GM12878 (cell line): ENCODE measurements at regions of chr17 and their contacts with region 1.

Region 1: GRCh38 chr17:45135192-45135977 is at the start of gene ACBD4:
- DNase-seq: peak; percentile 97
- ATAC-seq: peak; percentile 90
- H3K4me3 ChIP-seq: peak within 1 kb of the TSS; percentile 84
- H3K27ac ChIP-seq: peak within 1 kb of the TSS; percentile 28
- H3K4me1 ChIP-seq: peaks cover 8% of the 10 kb centered on the region
- H3K27me3 ChIP-seq: no peaks in the 10 kb centered on the region
- CTCF ChIP-seq: peak; percentile 100
- EP300 ChIP-seq: no peak
- POLR2A ChIP-seq: peak; percentile 73
- RAD21 ChIP-seq: peak; percentile 94
- polyA plus RNA-seq, gene ACBD4: 0.20 to 0.27 TPM

Region 2: DNA sequence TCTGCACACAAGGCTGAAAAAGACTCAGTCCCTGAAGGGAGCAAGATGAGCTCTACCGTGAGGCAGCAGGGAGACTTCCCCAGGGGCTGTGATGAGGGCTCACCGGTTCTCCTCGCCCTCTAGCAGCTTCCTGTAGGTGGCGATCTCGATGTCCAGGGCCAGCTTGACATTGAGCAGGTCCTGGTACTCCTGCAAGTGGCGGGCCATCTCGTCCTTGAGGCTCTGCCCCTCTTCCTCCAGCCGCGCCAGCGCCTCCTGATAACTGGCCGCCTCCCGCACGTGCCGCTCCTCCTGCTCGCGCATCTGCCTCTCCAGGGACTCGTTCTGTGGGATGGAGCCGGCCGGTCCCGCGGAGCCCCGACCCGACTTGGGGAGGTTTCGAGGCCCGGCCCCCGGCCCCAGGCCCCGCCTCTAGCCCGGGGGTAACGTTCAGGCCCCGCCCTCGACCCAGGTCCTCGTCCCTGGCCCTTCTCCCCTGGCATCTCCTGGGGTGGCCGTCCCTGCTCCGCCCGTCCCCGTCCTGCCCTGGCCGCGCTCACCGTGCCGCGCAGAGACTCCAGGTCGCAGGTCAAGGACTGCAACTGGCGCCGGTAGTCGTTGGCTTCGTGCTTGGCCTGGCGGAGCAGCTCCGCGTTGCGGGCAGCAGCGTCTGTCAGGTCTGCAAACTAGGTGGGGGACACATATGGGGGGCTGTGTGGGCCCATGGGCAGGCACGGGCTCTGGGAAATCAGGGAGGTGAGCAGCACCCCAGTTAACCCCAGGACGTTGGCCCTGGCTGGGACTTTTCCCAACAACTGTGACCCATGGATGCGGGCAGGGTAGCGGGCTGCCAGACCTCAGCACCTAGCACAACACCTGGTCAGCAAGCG is 224.0 kb before region 1 on chr17:
- CTCF ChIA-PET with region 1: interaction called, 11 read pairs
- POLR2A ChIA-PET with region 1: no interaction called
- RAD21 ChIA-PET with region 1: no interaction called
- SMC1A ChIA-PET with region 1: no interaction called
- in situ Hi-C with region 1: no loop called
- intact Hi-C with region 1: no loop called
- DNase-seq: no peak
- ATAC-seq: peak; percentile 91
- H3K4me3 ChIP-seq: no peak overlapping the region
- H3K27ac ChIP-seq: no peak overlapping the region
- H3K4me1 ChIP-seq: peaks cover 9% of the 10 kb centered on the region
- H3K27me3 ChIP-seq: no peaks in the 10 kb centered on the region; a peak in 3 of 4 replicates
- CTCF ChIP-seq: peak; percentile 44 to 49 (median 44); a peak in 5 of 6 replicates
- EP300 ChIP-seq: no peak
- POLR2A ChIP-seq: no peak
- RAD21 ChIP-seq: peak; percentile 13; the same call in 1 of the 2 replicates

Region 3: GRCh38 chr17:45038728-45039634 is 96.4 kb before region 1 on chr17:
- CTCF ChIA-PET with region 1: interaction called, 13 read pairs
- POLR2A ChIA-PET with region 1: no interaction called
- RAD21 ChIA-PET with region 1: no interaction called
- SMC1A ChIA-PET with region 1: interaction called, 3 read pairs
- in situ Hi-C with region 1: no loop called
- intact Hi-C with region 1: no loop called
- DNase-seq: no peak
- ATAC-seq: no peak
- H3K4me3 ChIP-seq: no peak overlapping the region
- H3K27ac ChIP-seq: peak overlapping the region; percentile 69
- H3K4me1 ChIP-seq: peaks cover 6% of the 10 kb centered on the region
- H3K27me3 ChIP-seq: no peaks in the 10 kb centered on the region
- CTCF ChIP-seq: no peak
- EP300 ChIP-seq: no peak
- POLR2A ChIP-seq: no peak
- RAD21 ChIP-seq: no peak

Region 4: DNA sequence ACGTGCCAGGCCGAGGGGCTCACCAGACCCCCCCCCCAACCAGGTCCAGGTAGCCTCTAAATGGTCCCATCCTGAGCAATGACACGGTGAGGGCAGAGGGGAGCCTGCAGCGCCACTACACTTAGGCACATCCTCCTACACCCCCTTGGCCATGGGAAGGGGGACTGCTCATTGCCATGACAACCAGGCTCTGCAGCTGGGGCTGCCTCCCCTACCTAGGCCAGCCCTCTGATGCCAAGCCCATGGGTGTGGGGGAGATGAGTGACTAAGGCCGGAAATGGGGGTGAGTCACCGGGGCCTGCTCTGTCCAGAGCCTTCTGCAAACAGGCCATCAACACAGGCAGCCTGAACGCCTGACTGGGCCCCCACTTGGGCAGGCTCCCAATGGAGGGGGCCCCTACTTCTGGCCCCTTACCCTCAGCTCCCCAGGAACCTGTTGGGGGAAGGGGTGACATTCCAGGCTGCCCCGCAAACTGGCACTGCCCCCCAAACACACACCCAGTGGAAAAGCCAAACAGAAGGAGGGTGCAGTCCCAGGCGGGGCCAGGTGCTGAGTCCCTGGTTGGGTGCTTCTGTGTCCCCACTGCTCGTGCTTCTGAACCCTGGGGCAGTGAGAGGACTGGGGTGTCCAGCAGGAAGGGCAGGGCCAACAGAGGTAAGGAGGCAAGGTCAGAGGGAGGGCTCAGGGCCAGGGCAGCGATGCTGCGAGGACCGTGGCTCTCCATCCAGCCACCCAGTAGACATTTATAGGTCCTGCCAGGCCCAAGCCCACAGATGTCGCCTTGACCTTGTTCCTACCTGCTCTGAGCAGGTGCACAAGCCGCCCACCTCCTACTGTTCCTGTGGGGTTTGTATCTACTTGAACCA is 11.2 kb before region 1 on chr17:
- CTCF ChIA-PET with region 1: interaction called, 11 read pairs
- POLR2A ChIA-PET with region 1: interaction called, 3 read pairs
- RAD21 ChIA-PET with region 1: interaction called, 4 read pairs
- SMC1A ChIA-PET with region 1: no interaction called
- in situ Hi-C with region 1: no loop called
- intact Hi-C with region 1: no loop called
- DNase-seq: no peak
- ATAC-seq: peak; percentile 92
- H3K4me3 ChIP-seq: no peak overlapping the region
- H3K27ac ChIP-seq: no peak overlapping the region
- H3K4me1 ChIP-seq: no peaks in the 10 kb centered on the region
- H3K27me3 ChIP-seq: no peaks in the 10 kb centered on the region
- CTCF ChIP-seq: no peak
- EP300 ChIP-seq: no peak
- POLR2A ChIP-seq: no peak
- RAD21 ChIP-seq: no peak

Region 5: GRCh38 chr17:45161019-45161825 is 25.8 kb after region 1 on chr17:
- CTCF ChIA-PET with region 1: interaction called, 58 read pairs
- POLR2A ChIA-PET with region 1: interaction called, 3 read pairs
- RAD21 ChIA-PET with region 1: interaction called, 40 read pairs
- SMC1A ChIA-PET with region 1: interaction called, 12 read pairs
- in situ Hi-C with region 1: no loop called
- intact Hi-C with region 1: no loop called
- DNase-seq: peak; percentile 100
- ATAC-seq: peak; percentile 96
- H3K4me3 ChIP-seq: peak overlapping the region; percentile 86
- H3K27ac ChIP-seq: peak overlapping the region; percentile 98
- H3K4me1 ChIP-seq: peaks cover 8% of the 10 kb centered on the region
- H3K27me3 ChIP-seq: no peaks in the 10 kb centered on the region
- CTCF ChIP-seq: no peak
- EP300 ChIP-seq: peak in 1 of 2 experiments; percentile 69; a peak in 2 of 4 replicates
- POLR2A ChIP-seq: peak; percentile 95
- RAD21 ChIP-seq: no peak

Region 6: GRCh38 chr17:45197555-45198334 is 62.4 kb after region 1 on chr17:
- CTCF ChIA-PET with region 1: interaction called, 291 read pairs
- POLR2A ChIA-PET with region 1: interaction called, 11 read pairs
- RAD21 ChIA-PET with region 1: interaction called, 108 read pairs
- SMC1A ChIA-PET with region 1: interaction called, 72 read pairs
- in situ Hi-C with region 1: loop called (anchors 5 kb)
- intact Hi-C with region 1: loop called (anchors 1 kb)
- DNase-seq: peak; percentile 54
- ATAC-seq: peak; percentile 100
- H3K4me3 ChIP-seq: no peak overlapping the region
- H3K27ac ChIP-seq: no peak overlapping the region
- H3K4me1 ChIP-seq: peaks cover 8% of the 10 kb centered on the region
- H3K27me3 ChIP-seq: no peaks in the 10 kb centered on the region
- CTCF ChIP-seq: peak; percentile 99 to 100 (median 99)
- EP300 ChIP-seq: no peak
- POLR2A ChIP-seq: no peak
- RAD21 ChIP-seq: peak; percentile 97

Region 7: GRCh38 chr17:45247429-45248131 is 112.2 kb after region 1 on chr17:
- CTCF ChIA-PET with region 1: interaction called, 18 read pairs
- POLR2A ChIA-PET with region 1: no interaction called
- RAD21 ChIA-PET with region 1: no interaction called
- SMC1A ChIA-PET with region 1: no interaction called
- in situ Hi-C with region 1: no loop called
- intact Hi-C with region 1: no loop called
- DNase-seq: peak; percentile 78
- ATAC-seq: peak; percentile 95
- H3K4me3 ChIP-seq: peak overlapping the region; percentile 89
- H3K27ac ChIP-seq: peak overlapping the region; percentile 98
- H3K4me1 ChIP-seq: peaks cover 14% of the 10 kb centered on the region
- H3K27me3 ChIP-seq: no peaks in the 10 kb centered on the region
- CTCF ChIP-seq: no peak
- EP300 ChIP-seq: no peak; a peak in 1 of 4 replicates
- POLR2A ChIP-seq: peak; percentile 91
- RAD21 ChIP-seq: no peak

Region 8: GRCh38 chr17:45291171-45291805 is 155.9 kb after region 1 on chr17:
- CTCF ChIA-PET with region 1: no interaction called
- POLR2A ChIA-PET with region 1: no interaction called
- RAD21 ChIA-PET with region 1: no interaction called
- SMC1A ChIA-PET with region 1: no interaction called
- in situ Hi-C with region 1: no loop called
- intact Hi-C with region 1: no loop called
- DNase-seq: no peak
- ATAC-seq: no peak
- H3K4me3 ChIP-seq: no peak overlapping the region
- H3K27ac ChIP-seq: 0 out of 2 replicates have a peak overlapping the region, but pooled peaks have one; percentile 15
- H3K4me1 ChIP-seq: peaks cover 60% of the 10 kb centered on the region
- H3K27me3 ChIP-seq: no peaks in the 10 kb centered on the region
- CTCF ChIP-seq: no peak
- EP300 ChIP-seq: no peak
- POLR2A ChIP-seq: no peak
- RAD21 ChIP-seq: no peak